Common myeloid progenitor, CD34-positive (primary cell): ENCODE measurements at regions of chr1 and their contacts with region 1.

Region 1: DNA sequence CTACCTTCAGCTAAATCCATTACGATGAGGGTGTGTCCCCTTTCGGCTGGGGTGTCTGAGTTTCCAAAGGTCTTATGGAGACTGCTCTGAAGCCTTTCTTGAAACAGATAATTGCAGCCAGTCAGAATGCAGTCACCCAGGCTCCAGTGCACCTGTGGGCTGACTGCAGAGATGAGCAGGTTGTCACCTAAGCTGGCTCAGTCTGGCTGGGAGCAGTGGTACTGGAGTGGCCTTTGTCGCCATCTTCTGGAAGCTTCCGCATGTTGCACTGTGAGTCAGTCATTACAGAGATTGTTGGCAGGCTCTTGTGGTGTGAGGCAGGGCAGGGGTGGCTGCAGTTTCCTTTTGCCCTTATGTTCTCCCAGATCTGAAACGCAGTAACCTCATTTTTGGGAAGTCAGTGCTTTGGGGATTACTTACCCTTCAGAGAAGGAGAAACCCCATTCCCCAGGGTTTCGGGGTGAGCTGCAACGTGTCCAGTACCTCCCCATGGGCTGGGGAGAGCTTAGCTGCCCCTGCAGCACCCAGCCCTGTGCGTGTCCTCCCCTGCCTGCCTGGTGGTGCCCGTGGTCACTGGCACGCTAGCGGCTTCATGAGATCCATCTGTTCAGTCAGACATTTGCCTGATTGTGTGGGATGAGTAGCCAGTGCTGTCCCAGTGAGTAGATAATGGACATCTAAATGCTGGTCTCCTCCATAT is 48.0 kb downstream of the SMYD2 start:
- DNase-seq: peak; percentile 64 to 84 (median 75)
- H3K4me3 ChIP-seq: no peak overlapping the region
- H3K27ac ChIP-seq: no peak overlapping the region
- H3K4me1 ChIP-seq: peaks cover 6 to 21% (median 12%) of the 10 kb centered on the region in 4 experiments
- H3K27me3 ChIP-seq: no peaks in the 10 kb centered on the region

Region 2: GRCh38 chr1:213956295-213956770 is 372.6 kb before region 1 on chr1:
- CTCF ChIA-PET with region 1: no interaction called
- POLR2A ChIA-PET with region 1: no interaction called
- DNase-seq: no peak
- H3K4me3 ChIP-seq: no peak overlapping the region
- H3K27ac ChIP-seq: no peak overlapping the region
- H3K4me1 ChIP-seq: no peaks in the 10 kb centered on the region
- H3K27me3 ChIP-seq: peaks cover 0 to 2% (median 0%) of the 10 kb centered on the region in 5 experiments

Region 3: DNA sequence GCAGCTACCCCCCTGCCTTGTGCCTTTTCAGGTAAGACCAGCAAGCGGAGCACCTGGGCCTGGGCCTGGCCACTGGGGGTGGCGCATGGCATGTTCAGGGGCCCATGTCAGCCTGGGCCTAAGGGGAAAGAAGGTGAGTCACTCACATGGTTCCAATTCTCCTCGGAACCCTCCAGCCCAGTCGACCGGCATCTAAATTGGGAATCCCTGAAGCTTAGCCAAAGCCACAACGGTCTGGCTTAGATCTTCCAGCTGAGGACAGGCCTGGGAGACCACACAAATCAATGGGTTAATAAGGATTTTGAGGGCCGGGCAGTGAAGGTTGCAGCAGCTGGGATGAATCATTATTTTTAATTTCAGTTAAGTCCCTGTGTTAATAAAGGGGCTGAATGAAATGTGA is 193.0 kb before region 1 on chr1:
- CTCF ChIA-PET with region 1: no interaction called
- POLR2A ChIA-PET with region 1: no interaction called
- DNase-seq: no peak
- H3K4me3 ChIP-seq: no peak overlapping the region
- H3K27ac ChIP-seq: no peak overlapping the region
- H3K4me1 ChIP-seq: no peaks in the 10 kb centered on the region
- H3K27me3 ChIP-seq: no peaks in the 10 kb centered on the region

Region 4: DNA sequence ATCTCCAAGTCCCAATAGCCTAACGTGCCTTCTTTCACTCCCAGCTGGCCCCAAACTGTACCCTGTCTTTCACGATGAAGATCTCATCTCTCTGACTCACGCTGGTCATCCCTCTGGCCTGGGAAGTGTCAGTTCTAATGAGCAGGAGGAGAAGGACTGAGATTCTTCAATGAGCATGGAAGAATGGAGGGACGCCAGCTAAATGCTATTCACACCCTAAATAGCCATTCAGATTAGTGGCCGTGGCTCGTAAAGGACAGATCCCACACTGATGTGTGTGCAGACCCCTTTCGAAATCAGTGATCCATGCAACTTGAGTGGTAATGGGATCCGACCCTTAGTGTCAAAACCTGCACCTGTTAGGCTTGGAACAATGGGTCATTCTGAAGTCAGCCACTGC is 123.9 kb before region 1 on chr1:
- CTCF ChIA-PET with region 1: interaction called, 60 read pairs
- POLR2A ChIA-PET with region 1: no interaction called
- DNase-seq: no peak
- H3K4me3 ChIP-seq: no peak overlapping the region
- H3K27ac ChIP-seq: no peak overlapping the region
- H3K4me1 ChIP-seq: no peaks in the 10 kb centered on the region
- H3K27me3 ChIP-seq: peaks cover 0 to 1% (median 0%) of the 10 kb centered on the region in 5 experiments

Region 5: GRCh38 chr1:214241060-214241459 is 87.9 kb before region 1 on chr1:
- CTCF ChIA-PET with region 1: interaction called, 12 read pairs
- POLR2A ChIA-PET with region 1: no interaction called
- DNase-seq: no peak
- H3K4me3 ChIP-seq: no peak overlapping the region
- H3K27ac ChIP-seq: no peak overlapping the region
- H3K4me1 ChIP-seq: peaks cover 0 to 5% (median 0%) of the 10 kb centered on the region in 4 experiments
- H3K27me3 ChIP-seq: no peaks in the 10 kb centered on the region

Region 6: DNA sequence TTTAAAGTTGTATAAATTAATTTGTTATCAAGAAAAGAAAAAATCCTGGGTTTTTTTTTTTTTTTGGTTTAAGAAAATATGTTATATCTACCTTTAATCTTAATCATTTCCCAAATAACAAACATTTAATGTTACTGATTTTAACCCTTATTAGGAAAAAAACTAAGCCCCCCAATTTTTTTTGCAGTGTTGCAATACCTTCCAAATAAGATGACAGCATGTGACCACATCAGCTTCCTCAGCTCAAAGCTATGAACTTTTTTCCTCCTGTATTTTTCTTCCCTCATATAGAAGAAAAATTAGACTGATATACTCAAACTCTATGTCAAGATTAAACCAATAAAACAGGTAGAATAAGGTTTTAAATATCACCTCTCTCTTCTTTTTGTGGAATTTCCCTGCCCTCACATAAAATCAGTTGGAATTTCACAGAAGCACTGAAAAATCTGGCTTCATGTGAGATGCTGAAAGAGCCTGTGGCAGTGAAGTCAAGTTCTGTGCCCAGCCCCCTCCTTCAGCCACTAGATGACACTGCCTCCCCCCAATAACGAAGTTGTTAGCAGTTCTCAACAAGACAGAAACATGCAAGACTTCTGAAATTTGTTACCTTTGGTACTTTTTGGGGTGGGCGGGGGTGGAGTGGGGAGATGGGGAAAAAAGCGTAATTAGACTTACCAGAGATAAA is 57.6 kb before region 1 on chr1:
- CTCF ChIA-PET with region 1: interaction called, 22 read pairs
- POLR2A ChIA-PET with region 1: no interaction called
- DNase-seq: peak; percentile 9 to 35 (median 17)
- H3K4me3 ChIP-seq: no peak overlapping the region
- H3K27ac ChIP-seq: no peak overlapping the region
- H3K4me1 ChIP-seq: peaks cover 0 to 3% (median 0%) of the 10 kb centered on the region in 4 experiments
- H3K27me3 ChIP-seq: peaks cover 0 to 14% (median 0%) of the 10 kb centered on the region in 5 experiments

Region 7: DNA sequence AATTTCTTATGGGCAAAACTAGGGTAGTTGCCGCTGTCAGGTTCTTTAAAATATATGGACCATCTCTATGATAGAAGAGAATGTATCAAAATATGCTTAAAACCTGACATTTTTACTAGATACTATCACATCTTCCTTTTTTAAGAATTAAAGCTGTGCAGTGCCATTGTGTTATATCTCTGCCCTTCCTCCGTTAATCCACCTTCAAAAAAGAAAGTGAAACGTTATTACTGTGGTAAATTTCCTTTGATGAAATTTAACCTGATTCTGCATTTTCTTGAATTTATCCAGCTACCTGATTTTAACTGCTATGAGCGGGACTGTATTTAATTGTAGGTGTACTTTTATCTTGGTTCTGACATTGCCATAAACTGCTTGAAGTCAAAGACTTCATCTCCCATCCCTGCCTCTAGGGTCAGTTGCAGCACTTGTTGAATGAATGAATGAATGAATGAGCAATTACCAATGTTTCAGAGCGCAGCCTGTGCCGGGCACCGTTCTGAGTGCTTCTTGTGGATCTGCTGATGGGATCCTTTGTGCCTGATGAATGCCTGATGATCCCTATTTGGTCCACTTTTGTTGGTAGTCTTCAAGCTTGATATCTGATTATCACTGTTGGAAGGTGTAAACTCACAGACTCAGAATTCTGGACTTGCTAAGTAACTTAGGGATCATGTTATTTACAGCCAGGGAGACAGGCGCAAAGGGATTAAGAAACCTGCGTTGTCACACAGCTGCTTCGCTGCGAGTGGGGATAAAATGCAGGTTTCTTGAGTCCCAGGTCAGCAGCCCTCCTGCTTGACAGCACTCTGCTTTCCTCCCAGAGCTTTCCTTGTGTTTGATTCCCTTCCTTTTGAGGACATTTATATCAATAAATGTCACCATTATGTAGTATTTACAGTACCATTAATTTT is 17.9 kb before region 1 on chr1:
- CTCF ChIA-PET with region 1: interaction called, 62 read pairs
- POLR2A ChIA-PET with region 1: no interaction called
- DNase-seq: peak in 2 of 3 donors; percentile 24 to 34
- H3K4me3 ChIP-seq: peak overlapping the region in 5 of 7 experiments; percentile 3 to 73 (median 44)
- H3K27ac ChIP-seq: no peak overlapping the region
- H3K4me1 ChIP-seq: peaks cover 0 to 15% (median 4%) of the 10 kb centered on the region in 4 experiments
- H3K27me3 ChIP-seq: no peaks in the 10 kb centered on the region

Region 8: GRCh38 chr1:214439352-214440119 is 110.6 kb after region 1 on chr1:
- CTCF ChIA-PET with region 1: no interaction called
- POLR2A ChIA-PET with region 1: no interaction called
- DNase-seq: peak; percentile 44 to 91 (median 85)
- H3K4me3 ChIP-seq: peak overlapping the region in 6 of 7 experiments; percentile 28 to 67 (median 47)
- H3K27ac ChIP-seq: peak overlapping the region in 1 of 2 experiments; percentile 35
- H3K4me1 ChIP-seq: peaks cover 26 to 46% (median 39%) of the 10 kb centered on the region in 4 experiments
- H3K27me3 ChIP-seq: no peaks in the 10 kb centered on the region

Region 9: GRCh38 chr1:214454619-214455396 is 125.9 kb after region 1 on chr1:
- CTCF ChIA-PET with region 1: interaction called, 14 read pairs
- POLR2A ChIA-PET with region 1: no interaction called
- DNase-seq: peak in 1 of 3 donors; percentile 36
- H3K4me3 ChIP-seq: no peak overlapping the region
- H3K27ac ChIP-seq: no peak overlapping the region
- H3K4me1 ChIP-seq: peaks cover 8 to 14% (median 10%) of the 10 kb centered on the region in 4 experiments
- H3K27me3 ChIP-seq: no peaks in the 10 kb centered on the region